Mammary epithelial cell (primary cell): ENCODE measurements at regions of chr9 and their contacts with region 1.

Region 1: DNA sequence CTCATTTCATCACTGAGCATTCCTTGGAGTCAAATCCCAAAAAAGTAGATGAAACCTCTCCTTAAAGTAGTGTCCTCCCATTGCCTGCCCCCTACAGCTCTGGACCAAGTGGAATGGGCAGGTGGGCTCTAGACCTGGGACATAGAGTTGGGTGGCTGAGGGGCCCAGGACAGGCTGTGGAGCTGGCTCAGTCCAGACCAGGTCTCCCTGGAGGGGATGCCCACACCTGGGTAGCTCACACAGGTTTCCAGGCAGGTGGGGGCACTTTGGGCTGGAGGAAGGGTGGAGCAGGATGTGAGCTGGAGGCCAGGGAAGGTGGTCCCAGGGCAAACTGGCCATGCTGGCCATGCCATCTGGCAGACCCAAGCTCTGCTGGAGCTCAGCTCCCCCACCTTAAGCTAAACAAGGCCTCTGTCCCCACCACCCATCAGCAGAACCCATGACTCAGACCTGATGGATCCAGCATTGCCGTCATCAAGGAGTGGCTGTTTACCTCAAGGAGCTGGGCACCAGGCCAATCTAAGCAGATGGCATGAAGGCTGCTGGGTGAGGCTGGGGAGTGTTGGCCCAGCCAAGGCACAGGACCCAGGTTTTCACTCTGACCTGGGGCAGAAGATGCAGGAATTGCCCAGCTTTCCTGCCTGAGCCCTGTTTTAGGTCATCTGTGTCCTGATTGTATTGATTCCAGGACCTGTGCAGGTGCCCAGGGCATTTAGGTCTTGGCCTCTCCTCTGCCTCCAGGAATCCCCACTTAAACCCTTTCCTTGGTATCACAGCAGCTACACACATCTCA is 6.1 kb upstream of the SPINK4 start:
- DNase-seq: peak; percentile 100
- H3K4me3 ChIP-seq: no peak overlapping the region
- H3K27ac ChIP-seq: peak overlapping the region; percentile 79
- H3K4me1 ChIP-seq: peaks cover 62% of the 10 kb centered on the region
- H3K27me3 ChIP-seq: no peaks in the 10 kb centered on the region
- CTCF ChIP-seq: no peak

Region 2: DNA sequence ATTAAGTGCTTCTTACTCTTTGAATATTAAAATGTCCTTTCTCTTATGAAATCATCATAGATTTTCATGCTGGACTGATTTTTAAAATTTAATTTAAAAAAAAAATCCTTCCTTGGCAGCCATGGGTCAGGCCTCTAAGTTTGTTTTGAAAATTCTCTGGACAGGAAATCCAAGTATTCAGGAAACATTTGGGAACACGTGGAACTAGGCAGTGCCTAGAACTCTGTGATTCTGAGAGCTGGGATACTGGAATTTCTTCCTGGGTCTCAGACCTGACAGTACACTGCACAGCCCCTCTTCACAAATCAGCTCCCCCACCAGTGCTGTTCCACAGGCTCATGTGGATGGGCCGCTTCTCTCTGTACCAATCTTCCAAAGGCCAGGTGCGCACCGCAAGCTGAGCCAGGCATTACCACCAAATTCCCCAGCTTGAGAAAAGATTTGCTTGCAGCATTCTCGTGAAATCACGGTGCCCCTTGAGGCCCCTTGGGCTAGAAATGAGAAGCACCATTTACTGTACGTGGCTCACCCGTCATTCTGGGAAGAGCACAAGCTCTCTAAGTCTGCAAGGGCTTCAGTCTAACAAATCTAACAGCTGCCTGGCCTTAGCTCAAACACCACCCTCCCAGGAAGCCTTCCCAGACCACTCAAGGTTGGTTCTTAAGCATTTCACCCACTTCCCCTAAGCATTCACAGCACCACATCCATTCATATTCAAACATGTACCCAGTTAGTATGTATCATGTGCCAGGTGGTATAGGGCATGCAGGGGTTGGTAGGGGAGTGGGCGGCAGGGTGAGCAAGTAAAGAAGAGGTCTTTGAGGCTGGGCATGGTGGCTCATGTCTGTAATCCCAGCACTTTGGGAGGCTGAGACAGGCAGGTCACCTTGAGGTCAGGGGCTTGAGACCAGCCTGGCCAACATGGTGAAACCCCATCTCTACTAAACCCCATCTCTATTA is 93.2 kb before region 1 on chr9:
- CTCF ChIA-PET with region 1: no interaction called
- dilution Hi-C with region 1: no loop called
- in situ Hi-C with region 1: no loop called
- intact Hi-C with region 1: no loop called
- DNase-seq: no peak
- H3K4me3 ChIP-seq: no peak overlapping the region
- H3K27ac ChIP-seq: no peak overlapping the region
- H3K4me1 ChIP-seq: peaks cover 13% of the 10 kb centered on the region
- H3K27me3 ChIP-seq: no peaks in the 10 kb centered on the region
- CTCF ChIP-seq: no peak

Region 3: DNA sequence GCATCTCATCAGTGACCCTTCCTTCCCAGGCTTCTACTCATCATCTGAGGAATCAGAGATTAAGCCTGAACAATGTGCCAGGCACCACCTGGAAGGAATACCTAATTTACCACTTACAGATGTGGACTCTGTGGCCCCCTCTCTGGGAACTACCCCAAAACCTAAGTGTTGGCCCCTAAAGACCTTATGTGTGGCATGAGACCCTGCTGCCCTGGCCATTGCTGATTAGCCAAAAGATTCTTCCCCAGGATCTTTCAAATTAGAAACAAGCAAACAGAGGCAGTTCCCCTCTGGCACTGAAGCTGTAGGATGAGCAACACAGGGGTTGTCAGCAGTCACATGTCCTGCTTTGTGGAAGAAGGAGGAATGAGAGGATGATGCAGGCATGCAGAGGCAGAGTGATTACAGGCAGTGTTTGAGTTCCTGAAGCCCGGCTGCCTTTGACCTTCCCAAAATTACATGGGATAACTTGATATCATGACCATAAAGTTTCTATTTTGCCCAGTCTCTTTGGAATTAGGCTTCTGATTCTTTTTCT is 16.6 kb after region 1 on chr9:
- CTCF ChIA-PET with region 1: no interaction called
- dilution Hi-C with region 1: no loop called
- in situ Hi-C with region 1: no loop called
- intact Hi-C with region 1: loop called (anchors 1 kb)
- DNase-seq: peak; percentile 58
- H3K4me3 ChIP-seq: no peak overlapping the region
- H3K27ac ChIP-seq: no peak overlapping the region
- H3K4me1 ChIP-seq: no peaks in the 10 kb centered on the region
- H3K27me3 ChIP-seq: no peaks in the 10 kb centered on the region
- CTCF ChIP-seq: no peak

Region 4: GRCh38 chr9:33264473-33265177 is 30.7 kb after region 1 on chr9 and contains the starts of genes BAG1 and CHMP5:
- CTCF ChIA-PET with region 1: no interaction called
- dilution Hi-C with region 1: no loop called
- in situ Hi-C with region 1: no loop called
- intact Hi-C with region 1: loop called (anchors 1 kb)
- DNase-seq: peak; percentile 99
- H3K4me3 ChIP-seq: peak within 1 kb of the TSS; percentile 89 to 97 (median 96)
- H3K27ac ChIP-seq: peak within 1 kb of the TSS; percentile 87
- H3K4me1 ChIP-seq: peaks cover 17% of the 10 kb centered on the region
- H3K27me3 ChIP-seq: no peaks in the 10 kb centered on the region
- CTCF ChIP-seq: peak; percentile 11 to 45
- total RNA-seq, gene BAG1: 28.5 to 30.9 TPM
- total RNA-seq, gene CHMP5: 52.7 to 54.0 TPM